Astrocyte of the cerebellum (primary cell): ENCODE measurements at regions of chr1 and their contacts with region 1.

Region 1: GRCh38 chr1:39282537-39283216 is 78.2 kb downstream of the MACF1 start:
- DNase-seq: no peak
- H3K4me3 ChIP-seq: no peak overlapping the region
- CTCF ChIP-seq: no peak

Region 2: GRCh38 chr1:39230261-39231190 is 52.2 kb before region 1 on chr1:
- in situ Hi-C with region 1: no loop called
- DNase-seq: no peak
- H3K4me3 ChIP-seq: no peak overlapping the region
- CTCF ChIP-seq: no peak

Region 3: DNA sequence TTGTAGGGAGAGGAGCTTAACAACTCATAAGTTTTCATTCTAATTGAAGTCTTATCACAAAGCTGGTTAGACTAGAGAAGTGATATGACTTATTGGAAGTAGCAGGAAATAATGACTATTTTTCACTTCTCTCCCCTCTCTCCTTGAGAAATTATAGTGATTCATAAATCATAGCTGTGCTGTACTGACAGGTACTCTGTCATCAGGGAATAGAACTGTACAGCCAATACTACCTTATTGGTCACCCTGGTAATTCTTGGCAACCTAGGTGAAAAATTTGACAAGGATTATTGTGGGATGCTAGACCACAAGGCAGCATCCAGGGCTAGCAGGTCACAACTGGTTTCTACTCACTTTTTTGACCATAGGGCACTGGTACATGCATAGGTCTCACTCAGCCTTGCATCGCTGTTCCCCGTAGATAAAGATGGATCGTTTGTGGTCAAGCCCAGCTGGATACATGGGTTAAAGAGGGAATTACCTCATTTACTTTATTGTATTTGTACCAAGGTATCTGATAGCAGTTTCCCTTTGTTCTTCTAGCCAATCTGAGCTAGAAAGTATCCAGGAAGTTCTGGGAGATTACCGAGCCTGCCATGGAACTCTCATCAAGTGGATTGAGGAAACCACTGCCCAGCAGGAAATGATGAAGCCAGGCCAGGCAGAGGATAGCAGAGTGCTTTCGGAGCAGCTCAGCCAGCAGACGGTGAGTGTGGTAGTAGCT is 35.4 kb after region 1 on chr1:
- in situ Hi-C with region 1: loop called (anchors 5 kb)
- DNase-seq: peak; percentile 66
- H3K4me3 ChIP-seq: no peak overlapping the region
- CTCF ChIP-seq: no peak